Activated CD4-positive, alpha-beta memory T cell treated with anti-CD3 and anti-CD28 coated beads for 36 hours (primary cell): ENCODE measurements at regions of chr10 and their contacts with region 1.

Region 1: DNA sequence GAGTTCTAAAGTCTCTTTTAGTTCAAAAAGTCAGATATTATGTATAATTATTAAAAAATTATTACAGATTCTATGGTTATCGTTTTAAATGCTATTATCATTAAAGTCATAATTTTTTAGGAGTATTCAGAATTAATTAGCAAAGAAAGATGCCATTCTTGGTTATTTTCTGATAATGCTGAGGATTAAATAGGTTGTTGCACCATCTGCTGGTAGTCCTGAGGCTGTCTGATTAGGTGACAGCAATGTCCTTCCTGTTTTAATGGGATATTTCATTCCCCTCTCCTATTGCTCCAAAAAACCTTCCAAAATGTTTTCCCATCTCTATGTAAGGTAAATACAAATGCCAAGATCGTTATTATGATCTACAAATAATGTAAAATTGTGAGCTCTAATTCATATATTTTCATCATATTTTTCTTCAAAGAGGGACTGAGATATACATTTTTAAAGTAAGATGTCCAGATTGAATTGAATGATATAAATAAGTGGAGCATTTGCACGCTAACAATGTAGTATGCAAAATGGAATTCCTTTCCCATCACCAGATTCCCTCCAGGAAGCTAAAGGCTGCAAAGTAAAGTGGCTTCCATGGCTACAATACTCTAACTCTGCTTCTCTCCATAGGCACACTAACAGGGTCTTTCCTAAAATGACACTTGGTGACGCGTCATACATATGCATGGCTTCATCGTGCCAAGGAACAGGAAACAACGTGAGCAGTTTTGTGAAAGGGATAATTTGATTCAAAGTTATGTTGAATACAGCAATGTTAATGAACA is 58.8 kb upstream of the AKR1E2 start:
- DNase-seq: no peak
- H3K4me3 Mint-ChIP-seq: no peak overlapping the region
- H3K27ac Mint-ChIP-seq: no peak overlapping the region
- H3K4me1 Mint-ChIP-seq: peaks cover 5% of the 10 kb centered on the region
- H3K27me3 Mint-ChIP-seq: peaks cover 20% of the 10 kb centered on the region

Region 2: DNA sequence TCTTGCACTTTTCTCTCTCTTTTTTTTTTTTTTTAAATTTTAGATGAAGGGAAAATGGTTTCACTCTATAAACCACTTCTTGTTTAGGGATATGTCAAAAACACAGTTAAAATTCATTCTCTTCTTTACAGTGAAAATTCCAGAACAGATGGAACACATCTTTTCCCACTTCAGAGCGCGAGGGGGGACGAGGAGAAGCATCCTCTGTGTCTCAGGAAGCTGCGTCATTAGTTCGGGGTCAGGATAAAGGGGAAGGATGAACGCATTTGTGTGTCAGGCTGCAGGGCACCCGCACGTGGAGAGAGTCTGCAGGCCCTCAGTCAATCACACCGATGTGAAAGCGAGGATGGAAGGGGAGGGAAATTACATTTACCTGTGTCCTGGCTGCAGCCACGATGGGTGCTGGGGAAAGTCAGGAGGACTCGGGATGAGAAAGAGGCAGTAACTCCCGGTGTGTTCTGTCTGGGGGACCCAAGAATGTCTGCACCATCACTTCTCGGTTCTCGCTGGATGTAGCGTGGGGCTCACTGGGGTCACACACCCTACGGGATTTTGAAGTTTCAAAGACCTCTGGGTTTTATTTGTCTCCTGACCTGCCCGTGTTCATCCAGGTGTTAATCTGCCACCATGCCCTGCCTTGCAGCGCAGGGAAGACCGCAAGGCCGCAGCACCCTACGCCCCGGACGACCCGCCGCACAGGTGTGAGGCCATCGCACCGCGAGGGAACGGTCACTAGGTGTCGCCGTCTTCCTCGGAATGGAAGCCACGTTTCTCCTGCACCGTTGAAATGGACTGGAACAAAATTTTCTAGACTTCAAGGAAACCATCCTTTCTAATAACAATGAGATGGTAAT is 1527.9 kb before region 1 on chr10:
- CTCF ChIA-PET with region 1: interaction called, 11 read pairs
- POLR2A ChIA-PET with region 1: no interaction called
- intact Hi-C with region 1: loop called (anchors 5 kb)
- DNase-seq: peak; percentile 81
- H3K4me3 Mint-ChIP-seq: no peak overlapping the region
- H3K27ac Mint-ChIP-seq: no peak overlapping the region
- H3K4me1 Mint-ChIP-seq: peaks cover 3% of the 10 kb centered on the region
- H3K27me3 Mint-ChIP-seq: peaks cover 32% of the 10 kb centered on the region

Region 3: GRCh38 chr10:4407783-4408182 is 359.4 kb before region 1 on chr10:
- CTCF ChIA-PET with region 1: no interaction called
- POLR2A ChIA-PET with region 1: no interaction called
- intact Hi-C with region 1: no loop called
- DNase-seq: no peak
- H3K4me3 Mint-ChIP-seq: no peak overlapping the region
- H3K27ac Mint-ChIP-seq: no peak overlapping the region
- H3K4me1 Mint-ChIP-seq: peaks cover 19% of the 10 kb centered on the region
- H3K27me3 Mint-ChIP-seq: no peaks in the 10 kb centered on the region

Region 4: DNA sequence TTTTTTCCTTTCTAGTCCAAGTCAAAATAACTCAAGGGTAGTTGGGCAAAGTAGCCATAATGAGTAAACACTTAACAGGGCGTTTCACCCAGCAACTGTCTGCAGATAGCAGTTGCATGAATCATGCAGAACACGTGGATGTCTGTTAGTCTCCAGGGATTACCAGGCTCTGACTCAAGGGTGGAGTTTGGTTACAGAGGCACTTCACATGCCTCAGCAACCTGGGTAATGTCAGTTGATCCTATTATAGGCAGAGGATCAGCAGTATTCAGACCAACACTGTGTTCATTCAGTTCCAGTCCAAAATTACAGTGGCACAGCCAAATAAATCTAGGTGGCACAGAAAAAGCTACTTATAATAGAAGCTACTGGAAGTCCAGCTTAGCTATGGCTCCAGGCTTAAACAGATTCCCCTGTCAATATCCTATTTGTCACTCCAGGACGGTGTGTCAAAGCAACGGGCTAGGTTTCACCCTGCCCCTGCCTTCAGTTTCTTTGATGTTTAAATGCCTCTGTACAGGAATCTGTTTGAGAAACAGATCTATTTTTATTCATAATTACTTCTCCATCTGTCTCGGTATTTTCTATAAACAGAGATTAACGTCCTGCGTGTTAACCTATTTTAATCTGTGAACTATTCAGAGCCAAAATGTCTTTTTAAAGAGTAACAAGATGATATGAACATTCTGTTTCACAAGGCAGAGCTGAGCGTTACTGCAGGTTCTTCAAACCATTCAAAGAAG is 103.9 kb before region 1 on chr10:
- CTCF ChIA-PET with region 1: interaction called, 3 read pairs
- POLR2A ChIA-PET with region 1: no interaction called
- intact Hi-C with region 1: loop called (anchors 5 kb)
- DNase-seq: peak; percentile 46
- H3K4me3 Mint-ChIP-seq: no peak overlapping the region
- H3K27ac Mint-ChIP-seq: no peak overlapping the region
- H3K4me1 Mint-ChIP-seq: peaks cover 6% of the 10 kb centered on the region
- H3K27me3 Mint-ChIP-seq: peaks cover 11% of the 10 kb centered on the region

Region 5: DNA sequence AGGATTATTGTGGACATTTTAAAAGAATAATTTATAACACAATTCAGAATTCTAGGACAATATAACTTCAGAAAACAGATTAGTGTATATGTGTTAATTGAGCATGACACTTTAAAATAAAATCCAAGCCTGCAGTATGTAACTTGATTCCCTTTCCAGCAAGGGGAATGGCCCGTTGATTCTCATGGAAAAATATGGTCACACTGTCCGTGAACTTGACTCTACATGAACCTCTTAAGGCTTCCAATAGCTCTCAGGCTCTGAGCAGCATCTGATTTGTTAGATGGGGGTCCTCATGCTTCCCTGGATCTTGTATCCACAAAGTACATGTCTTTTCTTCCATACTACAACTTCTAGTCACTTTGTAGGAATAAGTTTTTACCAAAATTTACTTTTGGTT is 26.8 kb before region 1 on chr10:
- CTCF ChIA-PET with region 1: no interaction called
- POLR2A ChIA-PET with region 1: no interaction called
- intact Hi-C with region 1: no loop called
- DNase-seq: no peak
- H3K4me3 Mint-ChIP-seq: no peak overlapping the region
- H3K27ac Mint-ChIP-seq: no peak overlapping the region
- H3K4me1 Mint-ChIP-seq: no peaks in the 10 kb centered on the region
- H3K27me3 Mint-ChIP-seq: peaks cover 34% of the 10 kb centered on the region

Region 6: DNA sequence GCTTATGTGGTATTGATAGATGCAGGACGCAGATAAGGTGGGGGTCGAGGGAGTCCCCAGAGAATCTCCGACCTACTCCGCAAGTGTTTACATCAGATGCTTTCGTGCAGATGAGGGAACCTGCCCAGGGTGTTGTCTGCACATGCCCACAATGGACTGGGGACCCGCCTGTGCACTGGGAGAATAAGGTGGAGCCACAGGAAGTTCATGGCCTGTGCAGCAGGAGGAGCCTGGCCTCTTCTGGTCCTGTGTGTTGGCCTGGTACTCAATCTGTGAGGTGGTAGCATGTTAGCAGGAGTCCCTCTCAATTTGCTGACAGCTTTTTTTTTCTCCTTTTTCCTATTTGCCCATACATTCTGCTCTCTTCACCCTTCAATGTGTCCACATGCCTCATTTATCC is 141.9 kb after region 1 on chr10:
- CTCF ChIA-PET with region 1: no interaction called
- POLR2A ChIA-PET with region 1: no interaction called
- intact Hi-C with region 1: no loop called
- DNase-seq: no peak
- H3K4me3 Mint-ChIP-seq: no peak overlapping the region
- H3K27ac Mint-ChIP-seq: no peak overlapping the region
- H3K4me1 Mint-ChIP-seq: no peaks in the 10 kb centered on the region
- H3K27me3 Mint-ChIP-seq: peaks cover 2% of the 10 kb centered on the region